Right cardiac atrium (tissue), 5 donors: ENCODE measurements at regions of chr15 and their contacts with region 1.

Region 1: GRCh38 chr15:29815000-29815710 is 7.1 kb downstream of the TJP1 start:
- DNase-seq: no peak
- ATAC-seq: peak; percentile 70 to 76
- H3K4me3 ChIP-seq: no peak overlapping the region
- H3K27ac ChIP-seq: no peak overlapping the region
- H3K4me1 ChIP-seq: peaks cover 2% of the 10 kb centered on the region
- H3K27me3 ChIP-seq: no peaks in the 10 kb centered on the region

Region 2: GRCh38 chr15:29724026-29724425 is 91.1 kb before region 1 on chr15:
- intact Hi-C with region 1: no loop called
- DNase-seq: no peak
- ATAC-seq: no peak
- H3K4me3 ChIP-seq: no peak overlapping the region
- H3K27ac ChIP-seq: no peak overlapping the region
- H3K4me1 ChIP-seq: peaks cover 3% of the 10 kb centered on the region
- H3K27me3 ChIP-seq: no peaks in the 10 kb centered on the region

Region 3: DNA sequence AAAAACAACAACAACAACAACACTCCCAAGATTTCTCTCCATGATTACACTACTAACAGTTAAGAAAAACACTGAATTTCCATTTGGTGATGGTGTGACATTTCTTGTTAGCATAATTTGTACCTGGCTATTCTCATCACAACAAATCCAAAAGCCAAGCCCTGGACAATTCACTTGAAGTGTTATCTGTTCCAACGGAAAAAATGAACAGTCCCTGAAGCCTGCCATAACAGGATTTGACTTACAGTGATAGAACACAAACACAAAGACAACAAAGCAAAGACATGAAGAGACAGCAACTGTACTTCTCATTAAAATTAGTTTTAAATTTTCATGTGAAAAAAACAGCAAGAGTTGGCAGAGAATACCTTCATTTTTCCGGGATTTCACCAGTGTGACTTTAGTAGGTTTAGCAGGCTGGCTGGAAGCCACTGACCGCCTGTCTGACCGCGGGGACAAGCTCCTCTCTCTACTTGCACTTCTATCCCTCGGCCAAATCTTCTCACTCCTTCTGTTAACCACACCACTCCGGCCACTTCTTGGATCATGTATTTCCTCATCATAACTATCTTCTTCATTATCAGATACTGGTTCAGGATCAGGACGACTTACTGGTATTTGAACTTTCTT is 49.1 kb before region 1 on chr15:
- intact Hi-C with region 1: loop called in 1 of 4 experiments (anchors 10 kb)
- DNase-seq: peak in 2 of 3 donors; percentile 48 to 79
- ATAC-seq: peak; percentile 69 to 74
- H3K4me3 ChIP-seq: no peak overlapping the region
- H3K27ac ChIP-seq: no peak overlapping the region
- H3K4me1 ChIP-seq: peaks cover 6% of the 10 kb centered on the region
- H3K27me3 ChIP-seq: no peaks in the 10 kb centered on the region

Region 4: DNA sequence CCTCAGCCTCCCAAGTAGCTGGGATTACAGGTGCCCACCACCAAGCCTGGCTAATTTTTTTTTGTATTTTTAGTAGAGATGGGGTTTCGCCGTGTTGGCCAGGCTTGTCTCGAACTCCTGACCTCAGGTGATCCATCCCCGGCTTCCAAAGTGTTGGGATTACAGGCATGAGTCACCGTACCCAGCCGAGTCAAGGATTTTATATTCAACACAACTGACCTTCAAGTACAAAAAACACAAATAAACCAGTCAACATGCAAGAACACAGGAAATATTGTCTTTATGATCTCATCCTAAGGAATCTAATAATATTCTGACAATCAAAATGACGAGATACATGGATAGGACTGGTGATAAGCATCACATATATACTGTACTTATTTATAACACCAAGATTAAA is 30.7 kb before region 1 on chr15:
- intact Hi-C with region 1: loop called in 1 of 4 experiments (anchors 1 kb)
- DNase-seq: no peak
- ATAC-seq: no peak
- H3K4me3 ChIP-seq: no peak overlapping the region
- H3K27ac ChIP-seq: no peak overlapping the region
- H3K4me1 ChIP-seq: peaks cover 2% of the 10 kb centered on the region
- H3K27me3 ChIP-seq: no peaks in the 10 kb centered on the region